CD8-positive, alpha-beta memory T cell (primary cell): ENCODE measurements at regions of chr5 and their contacts with region 1.

Region 1: GRCh38 chr5:50667653-50668595 is 1.5 kb downstream of the PARP8 start:
- DNase-seq: peak; percentile 82 to 93 (median 90)
- H3K4me3 ChIP-seq: peak overlapping the region; percentile 86
- H3K4me3 Mint-ChIP-seq: peak overlapping the region; percentile 91 to 100 (median 97)
- H3K27ac ChIP-seq: peak overlapping the region; percentile 99
- H3K27ac Mint-ChIP-seq: peak overlapping the region; percentile 94 to 100 (median 99)
- H3K4me1 ChIP-seq: peaks cover 49% of the 10 kb centered on the region
- H3K4me1 Mint-ChIP-seq: peaks cover 65 to 76% (median 75%) of the 10 kb centered on the region in 3 donors
- H3K27me3 ChIP-seq: no peaks in the 10 kb centered on the region
- H3K27me3 Mint-ChIP-seq: peaks cover 0 to 13% of the 10 kb centered on the region in 2 donors

Region 2: DNA sequence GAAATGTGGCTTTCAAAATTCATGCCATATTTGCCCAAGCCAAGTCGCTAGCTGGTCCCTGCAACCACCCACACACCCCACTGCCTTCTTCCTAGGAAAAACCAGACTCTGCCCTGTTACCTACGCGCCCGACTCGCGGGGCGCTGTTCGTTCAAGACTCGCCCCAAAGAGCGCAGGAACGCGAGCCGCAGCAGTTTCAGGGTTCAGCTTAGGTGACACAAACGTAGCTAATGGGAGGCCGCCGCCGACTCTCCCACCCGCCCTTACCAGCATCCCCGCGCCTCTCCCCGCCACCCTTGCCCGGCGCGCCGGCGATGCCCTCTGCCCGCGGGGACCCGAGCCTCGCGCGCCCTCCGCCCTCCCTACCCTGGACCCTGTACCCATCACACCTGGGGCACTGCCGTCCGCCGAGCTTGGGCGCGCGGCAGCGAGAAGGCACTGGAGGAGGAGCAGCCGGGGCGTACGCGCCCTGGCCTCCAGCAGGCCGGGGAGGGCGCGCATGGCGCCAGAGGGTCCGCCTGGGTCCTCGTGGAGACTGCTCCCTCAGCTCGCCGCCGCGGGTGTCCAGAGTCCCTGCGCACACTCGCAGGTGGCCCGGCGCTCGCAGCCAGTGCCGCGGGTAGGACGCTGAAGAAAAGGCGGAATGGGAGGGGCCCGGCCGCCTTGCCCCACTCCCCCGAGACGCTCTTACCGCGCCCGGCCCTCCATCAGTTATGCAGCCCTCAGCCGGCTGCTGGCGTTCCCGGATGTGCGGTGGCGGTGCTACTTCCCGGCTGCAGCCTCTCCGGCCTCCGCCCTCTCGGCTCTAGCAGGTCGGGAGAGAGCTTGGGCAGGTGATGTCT is 227.1 kb before region 1 on chr5 and contains the start of gene EMB:
- CTCF ChIA-PET with region 1: interaction called, 15 read pairs
- POLR2A ChIA-PET with region 1: interaction called, 26 read pairs
- DNase-seq: peak; percentile 69 to 87 (median 83)
- H3K4me3 ChIP-seq: peak within 1 kb of the TSS; percentile 95
- H3K4me3 Mint-ChIP-seq: peak within 1 kb of the TSS; percentile 92 to 100 (median 97)
- H3K27ac ChIP-seq: peak within 1 kb of the TSS; percentile 92
- H3K27ac Mint-ChIP-seq: peak within 1 kb of the TSS; percentile 96 to 98 (median 96)
- H3K4me1 ChIP-seq: peaks cover 50% of the 10 kb centered on the region
- H3K4me1 Mint-ChIP-seq: peaks cover 64 to 86% (median 81%) of the 10 kb centered on the region in 3 donors
- H3K27me3 ChIP-seq: no peaks in the 10 kb centered on the region
- H3K27me3 Mint-ChIP-seq: no peaks in the 10 kb centered on the region
- total RNA-seq, gene EMB: 140 to 145 TPM

Region 3: GRCh38 chr5:50653946-50654345 is 14.0 kb before region 1 on chr5:
- CTCF ChIA-PET with region 1: no interaction called
- POLR2A ChIA-PET with region 1: no interaction called
- DNase-seq: no peak
- H3K4me3 ChIP-seq: no peak overlapping the region
- H3K4me3 Mint-ChIP-seq: peak overlapping the region in 1 of 7 donors; percentile 8
- H3K27ac ChIP-seq: no peak overlapping the region
- H3K27ac Mint-ChIP-seq: peak overlapping the region in 1 of 8 donors; percentile 71
- H3K4me1 ChIP-seq: no peaks in the 10 kb centered on the region
- H3K4me1 Mint-ChIP-seq: peaks cover 22 to 65% (median 35%) of the 10 kb centered on the region in 3 donors
- H3K27me3 ChIP-seq: no peaks in the 10 kb centered on the region
- H3K27me3 Mint-ChIP-seq: no peaks in the 10 kb centered on the region

Region 4: GRCh38 chr5:50684721-50685120 is 16.8 kb after region 1 on chr5:
- CTCF ChIA-PET with region 1: no interaction called
- POLR2A ChIA-PET with region 1: no interaction called
- DNase-seq: no peak
- H3K4me3 ChIP-seq: no peak overlapping the region
- H3K4me3 Mint-ChIP-seq: peak overlapping the region in 1 of 7 donors; percentile 66
- H3K27ac ChIP-seq: no peak overlapping the region
- H3K27ac Mint-ChIP-seq: peak overlapping the region in 6 of 8 donors; percentile 27 to 70 (median 47)
- H3K4me1 ChIP-seq: peaks cover 40% of the 10 kb centered on the region
- H3K4me1 Mint-ChIP-seq: peaks cover 10 to 84% (median 11%) of the 10 kb centered on the region in 3 donors
- H3K27me3 ChIP-seq: no peaks in the 10 kb centered on the region
- H3K27me3 Mint-ChIP-seq: no peaks in the 10 kb centered on the region

Region 5: GRCh38 chr5:50886657-50887345 is 218.9 kb after region 1 on chr5:
- CTCF ChIA-PET with region 1: no interaction called
- POLR2A ChIA-PET with region 1: no interaction called
- DNase-seq: no peak
- H3K4me3 ChIP-seq: no peak overlapping the region
- H3K4me3 Mint-ChIP-seq: no peak overlapping the region
- H3K27ac ChIP-seq: no peak overlapping the region
- H3K27ac Mint-ChIP-seq: no peak overlapping the region
- H3K4me1 ChIP-seq: no peaks in the 10 kb centered on the region
- H3K4me1 Mint-ChIP-seq: no peaks in the 10 kb centered on the region
- H3K27me3 ChIP-seq: no peaks in the 10 kb centered on the region
- H3K27me3 Mint-ChIP-seq: peaks cover 4 to 15% of the 10 kb centered on the region in 2 donors

Region 6: DNA sequence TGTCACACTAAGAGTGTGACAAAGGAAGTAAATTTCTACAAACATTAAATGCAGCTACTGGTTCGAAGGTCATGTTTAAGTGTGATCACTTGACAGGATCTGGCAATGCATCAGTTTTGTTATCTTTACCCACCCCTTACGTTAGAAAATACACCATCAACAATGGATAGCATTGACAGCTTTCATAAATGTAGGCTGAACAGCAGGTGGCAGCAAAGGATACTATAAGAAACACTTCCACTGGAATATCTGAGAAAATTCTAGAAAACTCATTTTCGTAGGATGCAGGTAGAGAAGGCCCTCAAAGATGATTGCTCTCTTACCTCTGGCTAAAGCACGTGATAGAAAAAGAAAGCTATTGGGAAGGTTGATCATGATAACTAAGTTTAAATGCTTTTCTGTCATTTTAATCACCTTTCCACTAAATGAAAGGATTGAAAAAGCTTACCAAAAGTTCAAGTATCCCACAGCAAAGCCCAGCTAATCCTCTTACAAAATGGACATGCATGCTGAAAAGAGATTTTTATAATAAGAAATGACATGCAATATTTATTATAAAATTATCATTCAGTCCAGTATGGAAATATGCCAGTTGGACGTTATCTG is 291.0 kb after region 1 on chr5:
- CTCF ChIA-PET with region 1: no interaction called
- POLR2A ChIA-PET with region 1: no interaction called
- DNase-seq: no peak
- H3K4me3 ChIP-seq: no peak overlapping the region
- H3K4me3 Mint-ChIP-seq: no peak overlapping the region
- H3K27ac ChIP-seq: no peak overlapping the region
- H3K27ac Mint-ChIP-seq: no peak overlapping the region
- H3K4me1 ChIP-seq: peaks cover 11% of the 10 kb centered on the region
- H3K4me1 Mint-ChIP-seq: peaks cover 8 to 13% (median 13%) of the 10 kb centered on the region in 3 donors
- H3K27me3 ChIP-seq: peaks cover 12% of the 10 kb centered on the region
- H3K27me3 Mint-ChIP-seq: peaks cover 20 to 77% of the 10 kb centered on the region in 2 donors